ENCODE measurements at regions of chr19 and their contacts with region 1.

Region 1: DNA sequence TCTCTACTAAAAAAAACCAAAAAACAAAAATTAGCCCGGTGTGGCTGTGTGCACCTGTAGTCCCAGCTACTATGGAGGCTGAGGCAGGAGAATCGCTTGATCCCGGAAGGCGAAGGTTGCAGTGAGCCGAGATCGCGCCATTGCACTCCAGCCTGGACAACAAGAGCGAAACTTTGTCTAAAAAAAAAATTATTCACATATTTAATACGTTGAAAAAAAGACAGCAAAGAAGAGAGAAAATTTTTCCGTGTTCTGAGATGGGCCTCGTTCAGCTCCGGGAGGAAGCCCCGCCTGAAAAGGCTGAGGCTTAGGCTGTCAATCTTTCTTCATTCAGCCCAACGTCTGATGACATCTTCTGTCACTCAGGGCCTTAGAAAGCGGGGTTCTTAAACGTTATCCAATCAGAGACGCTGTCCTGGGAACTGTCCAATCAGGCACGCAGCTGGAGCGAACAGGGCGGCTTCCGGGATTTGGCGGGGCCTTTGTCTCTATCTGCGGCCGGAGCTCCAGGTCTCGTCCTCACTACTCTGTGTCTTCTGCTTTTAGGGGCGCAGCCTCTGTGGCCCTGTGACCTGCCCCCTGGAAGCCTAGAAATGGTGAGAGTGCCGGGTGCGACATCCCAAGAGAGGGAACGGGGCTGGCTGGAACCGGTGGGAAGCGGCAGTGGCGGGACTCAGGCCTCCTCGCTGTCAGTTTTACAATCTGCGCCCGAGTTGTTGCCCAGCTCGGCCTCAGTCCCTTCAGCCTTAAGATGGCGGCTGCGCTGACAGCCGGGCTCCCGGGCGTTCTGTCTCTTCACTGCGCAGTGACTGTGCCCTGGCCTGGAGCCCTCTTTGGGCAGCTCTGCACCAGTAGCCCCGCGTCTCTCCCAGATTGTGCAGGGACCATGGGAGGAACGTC is at the start of gene ZNF726:
- DNase-seq: peak; percentile 66 to 91 (median 87)
- ATAC-seq: peak; percentile 99
- H3K4me3 ChIP-seq: peak within 1 kb of the TSS; percentile 61
- H3K4me3 Mint-ChIP-seq: peak within 1 kb of the TSS; percentile 90 to 97 (median 94)
- H3K27ac ChIP-seq: peak within 1 kb of the TSS; percentile 68
- H3K27ac Mint-ChIP-seq: peak within 1 kb of the TSS; percentile 69 to 96 (median 91)
- H3K4me1 ChIP-seq: peaks cover 0 to 3% of the 10 kb centered on the region in 2 donors
- H3K4me1 Mint-ChIP-seq: peaks cover 0 to 30% (median 14%) of the 10 kb centered on the region in 7 donors
- H3K27me3 ChIP-seq: no peaks in the 10 kb centered on the region
- H3K27me3 Mint-ChIP-seq: no peaks in the 10 kb centered on the region
- total RNA-seq, gene ZNF726: 3.3 to 6.8 (median 4.0) TPM

Region 2: GRCh38 chr19:22634450-22634827 is 1280.2 kb before region 1 on chr19:
- CTCF ChIA-PET with region 1: no interaction called
- POLR2A ChIA-PET with region 1: no interaction called
- intact Hi-C with region 1: loop called in 1 of 2 experiments (anchors 10 kb)
- DNase-seq: no peak
- ATAC-seq: no peak
- H3K4me3 ChIP-seq: peak overlapping the region; percentile 63
- H3K4me3 Mint-ChIP-seq: peak overlapping the region; percentile 70 to 98 (median 93)
- H3K27ac ChIP-seq: peak overlapping the region; percentile 55
- H3K27ac Mint-ChIP-seq: peak overlapping the region in 8 of 9 donors; percentile 59 to 95 (median 82)
- H3K4me1 ChIP-seq: no peaks in the 10 kb centered on the region
- H3K4me1 Mint-ChIP-seq: peaks cover 0 to 16% (median 5%) of the 10 kb centered on the region in 7 donors
- H3K27me3 ChIP-seq: no peaks in the 10 kb centered on the region
- H3K27me3 Mint-ChIP-seq: no peaks in the 10 kb centered on the region

Region 3: GRCh38 chr19:23273590-23274413 is 640.9 kb before region 1 on chr19:
- CTCF ChIA-PET with region 1: no interaction called
- POLR2A ChIA-PET with region 1: no interaction called
- intact Hi-C with region 1: loop called (anchors 2 to 10 kb)
- DNase-seq: peak; percentile 76 to 93 (median 91)
- ATAC-seq: peak; percentile 100
- H3K4me3 ChIP-seq: peak overlapping the region; percentile 94
- H3K4me3 Mint-ChIP-seq: peak overlapping the region; percentile 94 to 99 (median 98)
- H3K27ac ChIP-seq: peak overlapping the region; percentile 95
- H3K27ac Mint-ChIP-seq: peak overlapping the region; percentile 92 to 98 (median 96)
- H3K4me1 ChIP-seq: peaks cover 0 to 7% of the 10 kb centered on the region in 2 donors
- H3K4me1 Mint-ChIP-seq: peaks cover 15 to 47% (median 30%) of the 10 kb centered on the region in 7 donors
- H3K27me3 ChIP-seq: no peaks in the 10 kb centered on the region
- H3K27me3 Mint-ChIP-seq: no peaks in the 10 kb centered on the region

Region 4: DNA sequence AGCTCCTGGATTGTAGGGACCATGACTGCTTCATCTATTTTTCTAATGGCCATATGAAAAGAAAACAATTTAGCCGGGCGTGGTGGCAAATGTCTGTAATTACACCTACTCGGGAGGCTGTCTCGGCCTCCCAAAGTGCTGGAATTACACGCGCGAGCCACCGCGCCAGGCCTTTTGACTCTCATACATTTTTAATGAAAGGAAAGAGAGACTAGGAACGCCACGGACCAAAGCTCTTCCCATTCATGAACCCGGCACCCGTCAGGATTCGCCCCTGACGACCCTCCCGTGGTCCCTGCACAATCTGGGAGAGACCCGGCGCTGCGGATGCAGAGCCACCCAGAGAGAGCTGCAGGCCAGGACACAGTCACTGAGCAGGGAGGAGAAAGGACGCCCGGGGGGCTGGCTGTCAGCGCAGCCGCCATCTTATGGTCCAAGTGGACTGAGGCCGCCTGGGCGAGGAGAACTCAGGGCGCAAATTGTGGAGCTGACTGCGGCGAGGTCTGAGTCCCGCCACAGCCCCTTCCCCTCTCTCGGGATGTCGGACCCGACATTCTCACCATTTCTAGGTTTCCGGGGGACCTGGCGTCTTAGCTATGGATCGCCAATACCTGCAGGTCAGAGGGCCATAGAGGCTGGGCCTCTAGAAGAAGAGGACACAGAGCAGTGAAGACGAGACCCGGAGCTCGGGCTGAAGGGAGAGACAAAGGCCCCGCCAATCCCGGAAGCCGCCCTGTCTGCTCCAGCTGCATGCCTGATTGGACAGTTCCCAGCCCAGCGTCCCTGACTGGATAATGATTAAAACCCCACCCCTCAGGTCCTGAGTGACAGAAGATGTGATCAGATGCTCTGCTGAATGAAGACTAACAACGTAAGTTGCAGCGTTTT is 156.2 kb before region 1 on chr19 and contains the start of gene ZNF681:
- CTCF ChIA-PET with region 1: no interaction called
- POLR2A ChIA-PET with region 1: no interaction called
- intact Hi-C with region 1: loop called in 1 of 2 experiments (anchors 1 kb)
- DNase-seq: peak; percentile 56 to 93 (median 89)
- ATAC-seq: peak; percentile 93
- H3K4me3 ChIP-seq: peak within 1 kb of the TSS; percentile 95
- H3K4me3 Mint-ChIP-seq: peak within 1 kb of the TSS; percentile 87 to 96 (median 92)
- H3K27ac ChIP-seq: peak within 1 kb of the TSS; percentile 91
- H3K27ac Mint-ChIP-seq: peak within 1 kb of the TSS; percentile 89 to 97 (median 94)
- H3K4me1 ChIP-seq: peaks cover 0 to under 1% of the 10 kb centered on the region in 2 donors
- H3K4me1 Mint-ChIP-seq: peaks cover 12 to 48% (median 29%) of the 10 kb centered on the region in 7 donors
- H3K27me3 ChIP-seq: no peaks in the 10 kb centered on the region
- H3K27me3 Mint-ChIP-seq: no peaks in the 10 kb centered on the region
- total RNA-seq, gene ZNF681: 1.8 to 12.9 (median 4.4) TPM

Region 5: GRCh38 chr19:24033301-24033962 is 118.8 kb after region 1 on chr19:
- CTCF ChIA-PET with region 1: no interaction called
- POLR2A ChIA-PET with region 1: interaction called, 8 read pairs
- intact Hi-C with region 1: loop called (anchors 1 to 2 kb)
- DNase-seq: peak; percentile 50 to 89 (median 84)
- ATAC-seq: peak; percentile 99
- H3K4me3 ChIP-seq: peak overlapping the region; percentile 100
- H3K4me3 Mint-ChIP-seq: peak overlapping the region; percentile 99 to 100 (median 100)
- H3K27ac ChIP-seq: peak overlapping the region; percentile 90
- H3K27ac Mint-ChIP-seq: peak overlapping the region; percentile 96 to 100 (median 98)
- H3K4me1 ChIP-seq: peaks cover 11 to 24% of the 10 kb centered on the region in 2 donors
- H3K4me1 Mint-ChIP-seq: peaks cover 18 to 63% (median 56%) of the 10 kb centered on the region in 7 donors
- H3K27me3 ChIP-seq: no peaks in the 10 kb centered on the region
- H3K27me3 Mint-ChIP-seq: no peaks in the 10 kb centered on the region